Prostate gland (tissue), 2 donors: ENCODE measurements at regions of chr1 and their contacts with region 1.

Region 1: DNA sequence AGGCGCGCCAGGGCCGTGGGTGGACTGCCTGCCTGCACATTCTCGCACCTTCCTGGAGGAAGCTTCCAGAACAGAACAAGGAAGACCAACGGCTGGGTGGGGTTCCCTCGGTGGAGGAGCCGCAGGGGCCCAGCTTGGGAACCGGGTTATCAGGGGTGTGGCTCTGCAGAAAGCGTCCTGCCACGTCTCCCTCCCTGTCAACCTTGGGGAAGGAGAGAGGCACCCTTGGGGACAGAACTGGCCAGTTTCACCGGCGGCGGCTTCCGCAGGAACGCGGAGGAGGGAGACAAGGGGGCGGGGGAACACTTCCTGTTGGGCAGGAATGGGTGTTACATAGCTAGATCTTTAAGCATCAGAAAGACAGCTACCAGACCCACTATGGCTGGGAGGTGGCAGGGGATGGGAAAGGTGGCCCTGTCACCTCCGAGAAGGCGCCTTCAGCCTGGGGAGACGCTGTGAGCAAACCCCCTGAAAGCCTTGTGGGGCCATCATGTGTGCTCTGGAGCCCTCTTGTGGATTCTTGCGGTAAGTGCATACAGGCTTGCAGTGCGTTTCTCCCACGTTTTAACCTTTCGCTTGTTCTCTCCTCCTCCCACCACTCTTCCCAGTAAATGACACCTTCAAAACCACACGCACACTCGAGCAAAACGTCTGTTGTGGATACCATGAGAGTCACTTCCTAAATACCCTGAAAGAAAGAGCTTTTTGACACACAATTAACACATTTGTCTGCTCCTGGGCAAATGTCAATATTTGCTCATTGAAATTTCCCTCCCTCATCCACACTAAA is 3.8 kb upstream of the PLEKHA6 start:
- DNase-seq: peak; percentile 62
- H3K4me3 ChIP-seq: peak overlapping the region; percentile 18 to 20
- H3K27ac ChIP-seq: peak overlapping the region; percentile 64
- H3K4me1 ChIP-seq: peaks cover 7% of the 10 kb centered on the region
- H3K27me3 ChIP-seq: no peaks in the 10 kb centered on the region
- CTCF ChIP-seq: peak; percentile 95 to 98 (median 96)
- POLR2A ChIP-seq: no peak

Region 2: DNA sequence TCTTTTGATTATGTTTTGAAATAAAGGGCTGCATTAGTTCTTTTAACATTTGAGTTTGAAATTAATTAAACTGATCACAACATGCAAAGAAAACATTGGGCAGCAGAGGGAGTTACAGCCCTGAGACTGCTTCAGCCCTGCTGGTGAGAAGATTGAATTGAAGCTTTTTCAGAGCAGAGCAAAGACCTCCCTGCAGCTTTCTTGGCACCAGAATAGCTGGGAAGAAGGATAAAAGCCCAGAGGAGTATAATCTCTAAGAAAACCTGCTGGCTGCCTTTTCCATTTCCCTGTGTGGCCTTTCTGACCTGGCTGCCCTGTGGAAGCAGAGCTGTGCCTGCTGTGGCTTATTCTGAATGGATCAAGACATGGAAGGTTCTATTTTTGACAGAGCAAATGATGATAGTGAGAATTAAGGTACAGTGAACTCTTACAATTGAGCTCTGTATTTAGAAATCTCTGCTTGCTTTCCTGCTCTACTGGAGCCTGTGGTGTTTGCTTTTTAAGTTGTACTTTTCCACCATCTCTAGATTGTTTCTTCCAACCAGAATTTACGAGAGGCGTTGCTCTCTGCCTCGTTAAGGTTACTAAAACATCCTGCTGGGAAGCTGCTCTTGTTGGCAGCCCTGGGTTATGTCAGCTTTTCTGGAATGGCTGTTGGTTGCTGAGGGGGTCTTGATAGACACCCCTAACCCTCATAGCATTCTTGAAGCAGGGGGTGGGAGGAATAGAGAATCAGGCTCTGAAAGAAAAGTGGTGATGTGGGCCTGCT is 492.2 kb before region 1 on chr1:
- intact Hi-C with region 1: loop called (anchors 5 kb)
- DNase-seq: peak; percentile 60
- H3K4me3 ChIP-seq: no peak overlapping the region
- H3K27ac ChIP-seq: peak overlapping the region; percentile 82
- H3K4me1 ChIP-seq: peaks cover 2% of the 10 kb centered on the region
- H3K27me3 ChIP-seq: no peaks in the 10 kb centered on the region
- CTCF ChIP-seq: peak; percentile 80 to 99 (median 90)
- POLR2A ChIP-seq: no peak

Region 3: GRCh38 chr1:204162231-204163074 is 201.1 kb before region 1 on chr1:
- intact Hi-C with region 1: loop called (anchors 1 kb)
- DNase-seq: peak; percentile 90
- H3K4me3 ChIP-seq: no peak overlapping the region
- H3K27ac ChIP-seq: no peak overlapping the region
- H3K4me1 ChIP-seq: no peaks in the 10 kb centered on the region
- H3K27me3 ChIP-seq: no peaks in the 10 kb centered on the region
- CTCF ChIP-seq: peak; percentile 96 to 100 (median 99)
- POLR2A ChIP-seq: no peak

Region 4: GRCh38 chr1:204213668-204214662 is 149.6 kb before region 1 on chr1 and contains the start of gene GOLT1A:
- intact Hi-C with region 1: loop called (anchors 5 kb)
- DNase-seq: peak; percentile 69
- H3K4me3 ChIP-seq: peak within 1 kb of the TSS; percentile 14 to 28
- H3K27ac ChIP-seq: no peak within 1 kb of the TSS
- H3K4me1 ChIP-seq: no peaks in the 10 kb centered on the region
- H3K27me3 ChIP-seq: no peaks in the 10 kb centered on the region
- CTCF ChIP-seq: peak; percentile 18 to 79 (median 70)
- POLR2A ChIP-seq: peak; percentile 25
- total RNA-seq, gene GOLT1A: 3.0 to 3.6 TPM

Region 5: GRCh38 chr1:204257954-204258752 is 105.4 kb before region 1 on chr1:
- intact Hi-C with region 1: loop called (anchors 1 kb)
- DNase-seq: peak; percentile 60
- H3K4me3 ChIP-seq: no peak overlapping the region
- H3K27ac ChIP-seq: no peak overlapping the region
- H3K4me1 ChIP-seq: peaks cover 18% of the 10 kb centered on the region
- H3K27me3 ChIP-seq: no peaks in the 10 kb centered on the region
- CTCF ChIP-seq: peak; percentile 38 to 75 (median 66)
- POLR2A ChIP-seq: no peak

Region 6: DNA sequence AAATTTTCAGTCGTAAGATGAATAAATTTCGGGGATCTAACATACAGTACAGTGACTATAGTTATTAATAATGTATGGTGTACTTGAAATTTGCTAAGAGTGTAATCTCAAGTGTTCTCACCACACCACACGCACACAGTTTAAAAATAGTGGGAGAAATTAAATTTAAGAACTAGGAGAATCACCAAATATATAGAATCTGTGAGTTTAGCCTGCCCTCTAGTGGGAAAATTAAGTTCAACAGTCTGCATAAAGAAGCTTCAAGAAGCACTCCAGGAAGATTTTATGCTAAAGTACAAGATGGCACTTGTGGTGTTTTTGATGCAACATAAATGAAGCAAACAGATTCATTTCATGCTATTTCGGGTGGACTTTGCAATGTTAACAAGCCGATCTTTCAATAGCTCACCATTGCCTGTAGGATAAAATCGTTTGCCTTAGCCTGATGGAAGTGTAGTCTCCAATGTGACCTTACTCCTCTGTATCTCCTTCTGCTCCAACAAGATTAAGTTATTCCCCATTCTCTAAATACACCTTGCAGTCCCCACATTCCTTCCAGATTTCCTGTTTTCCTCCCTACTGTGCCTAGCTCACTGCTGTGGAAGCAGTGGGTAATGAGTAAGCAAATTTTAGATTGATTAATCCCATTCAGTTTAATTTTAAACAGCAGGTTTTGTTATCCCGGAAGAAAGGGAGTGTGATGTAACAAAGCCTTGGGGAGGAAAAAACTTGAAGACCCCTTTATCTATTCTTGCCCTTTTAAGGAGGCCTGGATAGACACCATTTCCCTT is 139.8 kb after region 1 on chr1:
- intact Hi-C with region 1: loop called (anchors 5 kb)
- DNase-seq: peak; percentile 55
- H3K4me3 ChIP-seq: no peak overlapping the region
- H3K27ac ChIP-seq: peak overlapping the region in 1 of 2 donors; percentile 18
- H3K4me1 ChIP-seq: peaks cover 2% of the 10 kb centered on the region
- H3K27me3 ChIP-seq: no peaks in the 10 kb centered on the region
- CTCF ChIP-seq: peak; percentile 77 to 92 (median 85)
- POLR2A ChIP-seq: no peak